Mammary epithelial cell (primary cell): ENCODE measurements at regions of chr3 and their contacts with region 1.

Region 1: GRCh38 chr3:86180696-86181095 is 810.3 kb downstream of the VGLL3 start:
- DNase-seq: peak; percentile 1
- H3K4me3 ChIP-seq: no peak overlapping the region
- H3K27ac ChIP-seq: no peak overlapping the region
- H3K4me1 ChIP-seq: no peaks in the 10 kb centered on the region
- H3K27me3 ChIP-seq: no peaks in the 10 kb centered on the region
- CTCF ChIP-seq: peak; percentile 20 to 57

Region 2: DNA sequence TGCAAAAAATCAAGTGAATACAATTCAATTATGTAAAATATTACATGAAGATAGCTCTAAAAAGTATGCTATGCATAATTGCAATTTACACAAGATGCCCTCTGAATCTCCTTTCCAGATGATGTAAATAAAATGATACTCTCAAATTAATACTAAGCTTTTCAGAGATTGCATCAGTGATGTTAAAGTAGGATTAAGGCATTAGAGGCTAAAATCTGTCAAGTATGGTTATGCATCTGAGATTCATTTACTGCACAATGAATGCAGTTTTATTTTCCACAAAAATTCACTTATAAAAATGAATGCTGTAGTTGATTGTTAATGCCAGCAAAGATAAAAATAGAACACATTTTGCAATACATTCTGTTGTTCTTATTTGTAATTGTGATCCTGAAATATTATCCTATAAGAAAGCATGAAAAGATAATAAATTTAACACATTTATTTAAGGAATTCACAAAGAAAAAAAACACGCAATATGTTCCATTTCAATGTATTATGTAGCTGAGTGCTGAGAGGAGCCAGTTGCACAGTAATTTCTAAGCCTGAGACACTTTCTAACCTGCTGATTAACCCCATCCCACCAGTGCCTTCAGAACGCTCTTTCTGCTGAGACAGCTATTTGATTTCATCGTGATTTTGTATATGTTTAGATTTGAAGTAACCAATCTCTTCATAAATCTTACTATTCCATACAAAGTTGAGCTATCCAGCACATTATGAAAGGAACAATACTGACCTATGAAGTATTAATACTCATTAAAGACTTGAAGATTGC is 997.5 kb before region 1 on chr3:
- CTCF ChIA-PET with region 1: no interaction called
- dilution Hi-C with region 1: no loop called
- in situ Hi-C with region 1: no loop called
- intact Hi-C with region 1: no loop called
- DNase-seq: no peak
- H3K4me3 ChIP-seq: no peak overlapping the region
- H3K27ac ChIP-seq: no peak overlapping the region
- H3K4me1 ChIP-seq: no peaks in the 10 kb centered on the region
- H3K27me3 ChIP-seq: no peaks in the 10 kb centered on the region
- CTCF ChIP-seq: no peak

Region 3: GRCh38 chr3:86147119-86147518 is 33.6 kb before region 1 on chr3:
- CTCF ChIA-PET with region 1: no interaction called
- dilution Hi-C with region 1: no loop called
- in situ Hi-C with region 1: no loop called
- intact Hi-C with region 1: no loop called
- DNase-seq: no peak
- H3K4me3 ChIP-seq: no peak overlapping the region
- H3K27ac ChIP-seq: no peak overlapping the region
- H3K4me1 ChIP-seq: no peaks in the 10 kb centered on the region
- H3K27me3 ChIP-seq: no peaks in the 10 kb centered on the region
- CTCF ChIP-seq: no peak

Region 4: DNA sequence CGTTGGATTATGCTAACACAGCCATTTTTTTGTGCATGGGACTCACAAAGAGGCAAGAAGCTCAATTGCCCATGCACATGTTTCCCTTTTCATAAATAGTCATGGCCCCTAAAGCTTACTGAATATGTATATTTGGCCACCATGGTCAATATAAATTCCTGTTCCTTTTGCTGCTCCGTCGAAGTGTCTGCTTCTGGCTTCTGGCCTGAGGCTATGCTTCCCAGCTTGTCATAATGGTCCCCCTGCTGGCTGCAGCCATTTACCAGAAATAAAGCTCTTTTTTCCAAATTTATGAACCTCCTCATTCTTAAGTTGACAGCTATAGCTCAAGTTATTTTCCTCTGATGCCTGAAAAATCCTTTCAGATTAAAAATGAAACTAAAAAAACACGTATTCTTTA is 208.1 kb after region 1 on chr3:
- CTCF ChIA-PET with region 1: no interaction called
- dilution Hi-C with region 1: no loop called
- in situ Hi-C with region 1: no loop called
- intact Hi-C with region 1: loop called (anchors 2 kb)
- DNase-seq: no peak
- H3K4me3 ChIP-seq: no peak overlapping the region
- H3K27ac ChIP-seq: no peak overlapping the region
- H3K4me1 ChIP-seq: no peaks in the 10 kb centered on the region
- H3K27me3 ChIP-seq: no peaks in the 10 kb centered on the region
- CTCF ChIP-seq: peak in 1 of 2 donors; percentile 5

Region 5: DNA sequence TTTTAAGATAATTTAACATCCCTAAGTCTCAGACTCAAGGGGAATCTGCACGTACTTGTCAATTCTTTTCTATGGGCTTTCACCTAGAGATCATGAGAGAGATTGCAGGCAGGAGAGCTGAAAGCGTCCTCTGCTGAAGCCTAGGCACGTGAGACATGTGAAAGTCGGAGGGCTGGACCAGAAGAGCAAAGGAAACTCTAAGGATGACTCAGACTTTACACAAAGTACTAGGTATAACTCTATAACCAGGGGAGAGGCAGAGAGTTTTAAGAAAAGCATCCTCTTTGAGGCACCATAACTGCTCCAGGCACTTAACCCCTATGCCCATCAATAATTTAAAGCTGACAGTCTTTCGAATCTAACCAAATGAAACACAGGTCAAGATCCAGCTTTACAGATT is 373.7 kb after region 1 on chr3:
- CTCF ChIA-PET with region 1: no interaction called
- dilution Hi-C with region 1: no loop called
- in situ Hi-C with region 1: no loop called
- intact Hi-C with region 1: loop called (anchors 2 kb)
- DNase-seq: peak; percentile 3
- H3K4me3 ChIP-seq: no peak overlapping the region
- H3K27ac ChIP-seq: no peak overlapping the region
- H3K4me1 ChIP-seq: no peaks in the 10 kb centered on the region
- H3K27me3 ChIP-seq: peaks cover 2% of the 10 kb centered on the region
- CTCF ChIP-seq: peak in 1 of 2 donors; percentile 1

Region 6: DNA sequence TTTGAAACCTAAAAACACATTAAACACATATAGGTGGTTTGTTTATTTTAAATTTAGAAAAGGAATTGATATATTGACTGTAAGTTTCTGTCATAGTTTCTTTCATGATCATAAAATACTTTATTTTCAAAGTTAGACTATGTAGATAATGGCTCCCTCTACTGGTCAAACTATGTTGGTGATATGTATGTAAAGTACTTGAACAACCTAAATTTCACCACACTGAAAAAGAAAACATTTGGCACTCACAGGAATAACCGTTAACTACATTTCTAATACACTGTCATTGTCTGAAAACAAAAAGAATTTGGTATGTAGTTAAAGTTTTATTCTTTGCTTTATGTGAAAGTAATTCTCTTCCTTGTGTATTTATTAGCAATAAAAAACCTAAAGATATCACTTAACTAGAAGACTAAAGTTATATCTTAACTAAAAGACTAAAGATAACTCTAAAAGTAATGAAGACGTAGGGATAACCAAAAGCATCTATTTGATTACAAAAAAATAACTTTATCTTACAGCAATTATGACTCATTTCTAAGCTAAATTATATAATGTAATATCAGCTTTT is 382.8 kb after region 1 on chr3:
- CTCF ChIA-PET with region 1: no interaction called
- dilution Hi-C with region 1: no loop called
- in situ Hi-C with region 1: no loop called
- intact Hi-C with region 1: loop called (anchors 1 kb)
- DNase-seq: peak; percentile 15
- H3K4me3 ChIP-seq: no peak overlapping the region
- H3K27ac ChIP-seq: no peak overlapping the region
- H3K4me1 ChIP-seq: no peaks in the 10 kb centered on the region
- H3K27me3 ChIP-seq: peaks cover 2% of the 10 kb centered on the region
- CTCF ChIP-seq: peak; percentile 59 to 62